Aorta (tissue), 5 donors: ENCODE measurements at regions of chr21 and their contacts with region 1.

Region 1: DNA sequence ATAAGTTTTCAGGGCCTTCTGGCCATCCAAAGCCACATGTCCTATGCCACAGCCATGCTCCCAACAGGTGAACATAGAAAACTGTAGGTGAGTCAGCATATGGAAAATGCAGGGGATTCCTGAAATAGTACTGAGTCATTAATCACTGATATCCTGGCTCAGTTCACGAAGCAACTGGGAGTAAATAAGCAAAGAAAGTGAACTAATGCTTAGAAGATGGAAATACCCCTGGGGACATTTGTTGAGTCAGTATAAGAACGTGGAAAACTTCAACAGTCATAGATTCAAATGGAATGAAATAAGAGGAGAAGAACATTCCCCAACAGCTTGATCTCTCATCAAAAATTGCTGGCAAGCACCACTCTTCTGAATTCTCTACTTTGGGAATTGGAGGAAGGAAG is 148.9 kb upstream of the RUNX1 start:
- DNase-seq: no peak
- ATAC-seq: peak; percentile 36
- H3K4me3 ChIP-seq: no peak overlapping the region
- H3K27ac ChIP-seq: no peak overlapping the region
- H3K4me1 ChIP-seq: peaks cover 0 to 2% of the 10 kb centered on the region in 2 donors
- H3K27me3 ChIP-seq: no peaks in the 10 kb centered on the region

Region 2: GRCh38 chr21:35057428-35057827 is 140.6 kb before region 1 on chr21:
- intact Hi-C with region 1: loop called in 1 of 2 experiments (anchors 5 kb)
- DNase-seq: no peak
- ATAC-seq: no peak
- H3K4me3 ChIP-seq: no peak overlapping the region
- H3K27ac ChIP-seq: no peak overlapping the region
- H3K4me1 ChIP-seq: peaks cover 0 to 3% of the 10 kb centered on the region in 2 donors
- H3K27me3 ChIP-seq: no peaks in the 10 kb centered on the region

Region 3: DNA sequence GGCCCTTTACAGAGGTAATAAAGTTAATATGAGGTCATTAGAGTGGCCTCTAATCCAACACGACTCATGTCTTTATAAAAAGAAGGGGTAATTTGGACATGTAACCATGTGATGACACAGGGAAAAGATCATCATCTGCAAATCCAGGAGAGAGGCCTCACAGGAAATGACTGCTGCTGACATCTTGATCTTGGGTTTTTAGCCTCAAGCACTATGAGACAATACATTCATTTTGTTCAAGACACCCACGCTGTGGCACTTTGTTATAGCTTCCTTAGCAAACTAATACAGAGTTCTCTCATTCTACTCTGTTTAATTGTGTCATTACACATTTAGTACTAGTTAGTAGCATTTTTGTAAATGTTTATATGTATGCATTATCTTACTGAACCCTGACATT is 85.0 kb before region 1 on chr21:
- intact Hi-C with region 1: no loop called
- DNase-seq: no peak
- ATAC-seq: no peak
- H3K4me3 ChIP-seq: no peak overlapping the region
- H3K27ac ChIP-seq: no peak overlapping the region
- H3K4me1 ChIP-seq: no peaks in the 10 kb centered on the region
- H3K27me3 ChIP-seq: no peaks in the 10 kb centered on the region

Region 4: GRCh38 chr21:35563885-35564451 is 365.9 kb after region 1 on chr21:
- intact Hi-C with region 1: loop called in 1 of 2 experiments (anchors 10 kb)
- DNase-seq: peak; percentile 85 to 89
- ATAC-seq: peak; percentile 40
- H3K4me3 ChIP-seq: no peak overlapping the region
- H3K27ac ChIP-seq: no peak overlapping the region
- H3K4me1 ChIP-seq: no peaks in the 10 kb centered on the region
- H3K27me3 ChIP-seq: no peaks in the 10 kb centered on the region